Panc1 (cell line): ENCODE measurements at regions of chr13 and their contacts with region 1.

Region 1: DNA sequence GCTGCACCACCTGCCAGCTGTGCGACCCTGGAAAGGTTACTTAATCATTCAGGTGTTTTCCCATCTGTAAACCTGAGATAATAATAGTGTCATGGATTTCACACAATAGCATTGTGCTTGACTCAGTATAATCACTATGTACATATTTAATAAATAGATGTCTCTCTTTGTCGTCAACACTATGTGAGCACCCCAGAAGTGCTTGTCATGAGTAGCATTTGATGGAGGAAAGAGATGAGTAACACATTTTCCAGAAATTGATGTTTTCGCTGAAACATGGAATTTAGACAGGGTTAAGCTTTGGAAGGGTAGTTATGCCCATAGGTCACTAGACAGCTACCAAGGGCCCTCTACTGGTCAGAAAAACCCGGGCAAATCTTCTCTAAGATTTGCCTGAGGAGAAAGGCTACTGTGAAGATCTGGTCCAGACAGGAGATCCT is 9.5 kb upstream of the MBNL2 start:
- DNase-seq: no peak
- ATAC-seq: peak; percentile 87
- H3K4me3 ChIP-seq: no peak overlapping the region
- H3K27ac ChIP-seq: peak overlapping the region; percentile 82
- H3K4me1 ChIP-seq: peaks cover 25% of the 10 kb centered on the region
- H3K27me3 ChIP-seq: no peaks in the 10 kb centered on the region
- CTCF ChIP-seq: peak; percentile 80

Region 2: GRCh38 chr13:97030705-97031452 is 181.7 kb before region 1 on chr13:
- CTCF ChIA-PET with region 1: no interaction called
- POLR2A ChIA-PET with region 1: no interaction called
- in situ Hi-C with region 1: no loop called
- intact Hi-C with region 1: loop called (anchors 2 kb)
- DNase-seq: no peak
- ATAC-seq: peak; percentile 74
- H3K4me3 ChIP-seq: no peak overlapping the region
- H3K27ac ChIP-seq: 0 out of 2 replicates have a peak overlapping the region, but pooled peaks have one; percentile 39
- H3K4me1 ChIP-seq: peaks cover 5% of the 10 kb centered on the region
- H3K27me3 ChIP-seq: no peaks in the 10 kb centered on the region
- CTCF ChIP-seq: peak; percentile 54; the same call in 1 of the 2 replicates

Region 3: DNA sequence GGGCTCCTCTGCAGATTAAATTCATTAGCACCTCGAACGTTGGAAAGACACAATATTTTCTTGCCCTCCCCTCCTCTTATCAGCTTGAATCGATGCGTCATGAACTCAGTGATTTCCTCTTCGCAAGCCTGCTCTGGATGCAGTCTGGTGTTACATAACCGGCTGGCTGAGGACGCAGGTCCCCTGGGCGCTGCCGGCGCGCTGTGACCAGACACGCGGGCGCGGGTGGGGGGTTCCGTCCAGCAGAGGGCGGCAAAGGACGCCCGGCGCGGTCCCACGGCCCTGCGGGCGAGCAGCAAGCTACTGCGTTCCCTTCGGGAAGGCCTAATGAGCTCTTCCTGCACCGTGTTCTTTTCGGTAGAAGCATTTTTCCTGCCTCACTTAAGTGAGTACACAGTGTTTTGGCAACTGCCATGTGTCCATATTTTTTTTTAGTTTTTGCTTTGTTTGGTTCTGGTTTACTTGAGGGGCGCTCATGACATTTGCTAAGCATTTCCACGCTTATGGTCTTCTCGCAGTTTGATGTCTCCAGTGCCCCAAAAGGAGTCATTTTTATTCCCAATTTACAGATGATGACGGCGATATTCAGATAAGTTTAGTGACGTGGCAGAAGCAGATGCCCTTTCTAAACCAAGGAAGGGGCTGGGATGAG is 102.7 kb before region 1 on chr13:
- CTCF ChIA-PET with region 1: interaction called, 9 read pairs
- POLR2A ChIA-PET with region 1: no interaction called
- in situ Hi-C with region 1: no loop called
- intact Hi-C with region 1: loop called (anchors 2 kb)
- DNase-seq: peak; percentile 48
- ATAC-seq: peak; percentile 92
- H3K4me3 ChIP-seq: peak overlapping the region in 1 of 2 experiments; percentile 27; a peak in 2 of 4 replicates
- H3K27ac ChIP-seq: peak overlapping the region; percentile 98
- H3K4me1 ChIP-seq: peaks cover 61% of the 10 kb centered on the region
- H3K27me3 ChIP-seq: no peaks in the 10 kb centered on the region
- CTCF ChIP-seq: peak; percentile 94